B cell (primary cell): ENCODE measurements at regions of chr6 and their contacts with region 1.

Region 1: DNA sequence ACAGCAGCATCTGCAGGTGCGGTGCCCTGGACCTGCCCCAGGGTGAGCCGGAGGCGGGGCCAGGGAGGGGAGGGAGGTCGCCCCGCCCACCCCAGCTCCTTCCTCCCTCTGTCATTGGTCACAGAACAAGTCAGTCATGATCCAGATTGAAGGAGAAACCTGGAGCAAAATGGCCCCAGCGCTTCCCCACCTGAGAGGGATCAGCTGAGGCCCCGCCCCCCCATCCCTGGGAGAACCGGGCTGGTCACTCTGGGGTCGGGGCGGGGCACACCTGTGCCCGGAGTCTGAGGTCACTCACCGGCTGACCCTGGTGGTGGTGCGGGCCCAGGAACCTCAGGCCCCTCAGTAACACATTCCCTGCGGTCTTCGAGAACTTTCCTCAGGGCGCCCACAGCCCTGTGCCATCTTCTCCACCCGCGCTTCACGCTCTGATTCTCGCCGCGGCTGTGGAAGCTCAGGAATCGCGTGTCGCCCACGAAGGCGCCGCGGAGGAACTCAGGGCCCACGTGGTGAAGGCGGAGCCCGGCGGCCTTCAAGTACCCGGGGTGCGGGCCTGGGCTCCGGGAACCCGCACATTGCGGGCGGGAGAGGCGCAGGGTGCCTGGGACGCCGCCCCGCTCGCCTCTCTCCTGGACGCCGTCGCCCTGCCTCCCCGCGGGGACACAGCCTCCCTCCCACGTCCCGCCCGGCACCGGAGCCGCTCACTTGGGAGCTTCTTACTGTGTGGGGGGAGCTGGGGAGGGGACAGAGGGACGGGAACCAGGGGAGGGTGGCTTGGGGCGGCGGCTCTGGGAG is 36.4 kb upstream of the HLA-C start:
- DNase-seq: peak; percentile 89
- ATAC-seq: peak; percentile 96
- H3K4me3 ChIP-seq: peak overlapping the region in 4 of 5 experiments; percentile 67 to 82 (median 70)
- H3K4me3 Mint-ChIP-seq: peak overlapping the region; percentile 93
- H3K27ac ChIP-seq: peak overlapping the region; percentile 18 to 23
- H3K27ac Mint-ChIP-seq: peak overlapping the region; percentile 83
- H3K4me1 ChIP-seq: peaks cover 0 to 16% of the 10 kb centered on the region in 2 donors
- H3K4me1 Mint-ChIP-seq: peaks cover 7% of the 10 kb centered on the region
- H3K27me3 ChIP-seq: peaks cover 0 to 12% (median 3%) of the 10 kb centered on the region in 4 experiments
- H3K27me3 Mint-ChIP-seq: peaks cover 20% of the 10 kb centered on the region
- CTCF ChIP-seq: no peak

Region 2: GRCh38 chr6:30990422-30991086 is 317.7 kb before region 1 on chr6:
- CTCF ChIA-PET with region 1: no interaction called
- POLR2A ChIA-PET with region 1: no interaction called
- intact Hi-C with region 1: no loop called
- DNase-seq: peak; percentile 26
- ATAC-seq: no peak
- H3K4me3 ChIP-seq: no peak overlapping the region
- H3K4me3 Mint-ChIP-seq: peak overlapping the region; percentile 37
- H3K27ac ChIP-seq: no peak overlapping the region
- H3K27ac Mint-ChIP-seq: no peak overlapping the region
- H3K4me1 ChIP-seq: no peaks in the 10 kb centered on the region
- H3K4me1 Mint-ChIP-seq: peaks cover 7% of the 10 kb centered on the region
- H3K27me3 ChIP-seq: no peaks in the 10 kb centered on the region
- H3K27me3 Mint-ChIP-seq: peaks cover 12% of the 10 kb centered on the region
- CTCF ChIP-seq: no peak

Region 3: GRCh38 chr6:31271641-31272357 is 36.4 kb before region 1 on chr6 and contains the start of gene HLA-C:
- CTCF ChIA-PET with region 1: interaction called, 5 read pairs
- POLR2A ChIA-PET with region 1: interaction called, 5 read pairs
- intact Hi-C with region 1: loop called (anchors 1 kb)
- DNase-seq: peak; percentile 98
- ATAC-seq: peak; percentile 88
- H3K4me3 ChIP-seq: peak within 1 kb of the TSS; percentile 72 to 94 (median 87)
- H3K4me3 Mint-ChIP-seq: peak within 1 kb of the TSS; percentile 98
- H3K27ac ChIP-seq: peak within 1 kb of the TSS; percentile 97 to 98
- H3K27ac Mint-ChIP-seq: peak within 1 kb of the TSS; percentile 100
- H3K4me1 ChIP-seq: peaks cover 33 to 46% of the 10 kb centered on the region in 2 donors
- H3K4me1 Mint-ChIP-seq: peaks cover 64% of the 10 kb centered on the region
- H3K27me3 ChIP-seq: no peaks in the 10 kb centered on the region
- H3K27me3 Mint-ChIP-seq: no peaks in the 10 kb centered on the region
- CTCF ChIP-seq: no peak
- total RNA-seq, gene HLA-C: 972 and 998 TPM in 2 replicates

Region 4: DNA sequence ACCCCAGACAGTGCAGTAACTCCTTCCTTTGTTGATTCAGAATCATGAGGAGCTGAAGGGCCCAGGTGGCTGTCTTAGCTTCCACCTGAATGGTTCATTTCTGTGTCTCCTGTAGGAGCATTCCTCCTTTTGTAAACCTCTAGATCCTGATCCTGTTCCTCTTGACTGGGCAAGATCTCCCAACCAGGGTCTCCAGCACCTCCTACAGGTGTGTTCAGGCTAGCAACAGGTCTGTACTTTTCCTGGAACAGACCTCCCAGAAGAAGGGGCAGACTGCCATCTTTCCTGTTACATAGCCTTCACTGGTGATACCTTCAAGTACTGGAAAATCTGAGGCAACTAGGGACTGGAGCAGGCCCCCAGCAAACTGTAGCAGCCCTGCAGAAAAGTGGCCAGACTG is 13.6 kb after region 1 on chr6:
- CTCF ChIA-PET with region 1: interaction called, 4 read pairs
- POLR2A ChIA-PET with region 1: no interaction called
- intact Hi-C with region 1: loop called (anchors 1 kb)
- DNase-seq: no peak
- ATAC-seq: no peak
- H3K4me3 ChIP-seq: no peak overlapping the region
- H3K4me3 Mint-ChIP-seq: no peak overlapping the region
- H3K27ac ChIP-seq: no peak overlapping the region
- H3K27ac Mint-ChIP-seq: no peak overlapping the region
- H3K4me1 ChIP-seq: no peaks in the 10 kb centered on the region
- H3K4me1 Mint-ChIP-seq: no peaks in the 10 kb centered on the region
- H3K27me3 ChIP-seq: peaks cover 0 to 2% (median 0%) of the 10 kb centered on the region in 4 experiments
- H3K27me3 Mint-ChIP-seq: peaks cover 42% of the 10 kb centered on the region
- CTCF ChIP-seq: no peak

Region 5: GRCh38 chr6:31351401-31352309 is 43.4 kb after region 1 on chr6:
- CTCF ChIA-PET with region 1: no interaction called
- POLR2A ChIA-PET with region 1: interaction called, 4 read pairs
- intact Hi-C with region 1: loop called (anchors 5 kb)
- DNase-seq: peak; percentile 65
- ATAC-seq: peak; percentile 11
- H3K4me3 ChIP-seq: no peak overlapping the region
- H3K4me3 Mint-ChIP-seq: peak overlapping the region; percentile 99
- H3K27ac ChIP-seq: peak overlapping the region in 1 of 2 donors; percentile 19
- H3K27ac Mint-ChIP-seq: peak overlapping the region; percentile 81
- H3K4me1 ChIP-seq: peaks cover 51 to 57% of the 10 kb centered on the region in 2 donors
- H3K4me1 Mint-ChIP-seq: peaks cover 67% of the 10 kb centered on the region
- H3K27me3 ChIP-seq: no peaks in the 10 kb centered on the region
- H3K27me3 Mint-ChIP-seq: no peaks in the 10 kb centered on the region
- CTCF ChIP-seq: no peak